ENCODE measurements at regions of chr2 and their contacts with region 1.

Region 1: DNA sequence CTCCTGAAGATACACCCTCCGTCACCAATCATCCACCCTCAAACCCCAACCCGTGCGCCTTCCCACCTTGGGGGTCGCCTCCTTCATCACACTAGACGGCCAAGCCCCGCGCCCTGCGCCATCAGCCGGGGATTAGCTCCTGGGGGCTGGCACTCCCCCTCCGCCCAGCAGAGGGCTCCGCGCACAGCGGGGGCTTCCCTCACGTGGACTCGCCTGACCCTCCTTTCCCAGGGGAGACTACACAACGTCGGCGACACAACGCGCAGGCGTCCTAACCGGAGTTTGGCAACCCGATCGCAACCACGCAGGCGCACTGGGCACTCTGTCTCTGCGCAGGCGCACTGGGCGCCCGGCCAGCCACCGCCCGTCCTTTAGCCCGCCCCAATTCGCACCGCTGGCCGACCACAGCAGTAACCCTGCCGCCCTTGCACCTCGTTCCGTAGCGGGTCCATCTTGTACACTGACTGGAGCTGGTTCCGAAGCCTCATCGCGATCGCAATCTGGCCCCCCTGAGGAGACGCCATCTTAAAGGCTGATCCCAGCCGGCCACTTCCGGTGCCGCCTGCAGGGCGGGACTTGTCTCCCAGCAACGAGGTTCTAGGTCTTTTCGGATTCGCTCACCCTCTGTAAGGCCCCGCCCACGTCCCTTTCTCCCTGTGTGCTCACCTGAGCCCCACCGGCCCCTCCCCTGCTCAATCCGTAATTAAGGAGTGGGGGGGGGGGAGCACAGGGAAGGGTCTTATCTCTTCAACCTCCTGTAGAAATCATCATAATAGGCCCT is at the start of gene PCGF1:
- DNase-seq: peak; percentile 99
- total RNA-seq, gene PCGF1: 11.4 TPM

Region 2: DNA sequence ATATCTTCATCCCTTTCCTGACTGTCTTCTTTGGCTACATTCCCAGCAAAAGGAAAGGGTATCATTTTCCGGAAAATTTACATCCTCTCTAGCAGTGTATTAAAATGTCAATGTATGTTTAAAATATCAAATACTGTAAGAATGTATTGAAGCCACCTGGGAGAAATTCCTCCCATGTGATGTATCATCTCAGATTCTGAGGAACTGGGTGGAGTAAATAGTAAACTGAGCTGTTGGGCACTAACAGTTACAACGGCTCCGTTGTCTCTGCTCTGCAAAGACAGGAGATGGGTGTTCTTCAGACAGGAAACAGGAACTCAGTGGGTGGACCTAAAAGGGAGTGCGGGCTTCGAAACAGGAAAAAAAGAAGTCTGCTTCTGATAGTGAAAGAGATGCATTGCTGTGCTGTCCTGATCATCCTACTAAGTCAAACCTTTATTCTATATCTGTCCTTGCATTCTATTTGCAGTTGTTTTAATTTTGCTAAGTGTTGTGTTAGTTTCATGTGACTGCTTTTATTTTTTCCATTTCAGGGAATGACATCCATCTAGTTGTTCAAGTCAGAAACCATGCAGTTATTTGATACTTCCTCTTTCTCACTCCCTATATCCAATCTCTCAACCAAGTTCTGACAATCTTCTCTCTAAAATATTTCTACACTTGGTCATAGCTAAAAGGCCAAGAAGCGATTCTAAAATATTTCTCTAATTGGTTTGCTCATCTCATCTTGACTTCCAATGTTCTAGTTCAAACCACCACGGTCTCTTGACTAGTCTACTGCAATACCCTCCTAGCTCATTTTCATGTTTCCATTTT is 66.6 kb after region 1 on chr2:
- intact Hi-C with region 1: no loop called
- DNase-seq: no peak

Region 3: GRCh38 chr2:74587664-74588277 is 80.4 kb after region 1 on chr2:
- intact Hi-C with region 1: loop called (anchors 5 kb)
- DNase-seq: peak; percentile 78

Measured in cardiac septum (tissue), 1 donor.